AG04449 (cell line): ENCODE measurements at regions of chr16 and their contacts with region 1.

Region 1: DNA sequence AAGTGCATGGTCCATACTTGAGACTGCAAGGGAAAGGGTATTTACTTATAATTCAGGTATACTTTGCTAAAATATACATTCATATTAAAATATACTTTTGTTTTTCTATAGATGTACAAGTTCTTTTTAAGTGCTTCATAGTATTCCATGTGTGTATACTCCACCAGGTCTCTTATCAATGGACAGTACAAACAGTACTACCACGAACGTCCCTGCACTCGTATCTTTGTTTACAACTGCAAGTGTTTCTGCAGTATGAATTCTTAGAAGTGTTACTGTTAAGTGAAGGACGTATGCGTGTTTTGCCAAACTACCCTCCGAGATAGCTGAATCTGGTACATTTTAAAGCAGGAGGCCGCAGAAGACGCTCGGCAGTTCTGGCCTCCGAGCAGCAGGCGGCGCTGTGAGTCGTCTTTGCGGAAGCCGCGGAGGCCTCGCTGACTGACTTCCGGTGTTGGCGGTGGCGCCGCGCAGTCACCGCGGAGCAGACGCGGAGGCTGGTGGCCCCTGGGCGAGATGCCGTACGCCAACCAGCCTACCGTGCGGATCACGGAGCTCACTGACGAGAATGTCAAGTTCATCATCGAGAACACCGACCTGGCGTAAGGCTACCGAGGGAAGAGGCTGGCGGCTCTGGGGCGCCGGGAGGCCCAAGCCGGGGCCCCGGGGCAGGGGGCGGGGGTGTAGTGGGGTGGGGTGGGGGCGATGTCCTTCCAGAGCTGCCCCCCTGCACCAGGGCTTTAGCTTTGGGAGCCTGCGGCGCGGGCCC is at the start of gene POLR2C:
- DNase-seq: peak; percentile 12
- H3K4me3 ChIP-seq: peak within 1 kb of the TSS; percentile 69
- CTCF ChIP-seq: peak; percentile 94

Region 2: GRCh38 chr16:57447186-57447962 is 15.0 kb before region 1 on chr16 and contains the starts of genes CIAPIN1 and COQ9:
- CTCF ChIA-PET with region 1: interaction called, 141 read pairs
- POLR2A ChIA-PET with region 1: interaction called, 13 read pairs
- DNase-seq: peak; percentile 33
- H3K4me3 ChIP-seq: peak within 1 kb of the TSS; percentile 84
- CTCF ChIP-seq: no peak

Region 3: DNA sequence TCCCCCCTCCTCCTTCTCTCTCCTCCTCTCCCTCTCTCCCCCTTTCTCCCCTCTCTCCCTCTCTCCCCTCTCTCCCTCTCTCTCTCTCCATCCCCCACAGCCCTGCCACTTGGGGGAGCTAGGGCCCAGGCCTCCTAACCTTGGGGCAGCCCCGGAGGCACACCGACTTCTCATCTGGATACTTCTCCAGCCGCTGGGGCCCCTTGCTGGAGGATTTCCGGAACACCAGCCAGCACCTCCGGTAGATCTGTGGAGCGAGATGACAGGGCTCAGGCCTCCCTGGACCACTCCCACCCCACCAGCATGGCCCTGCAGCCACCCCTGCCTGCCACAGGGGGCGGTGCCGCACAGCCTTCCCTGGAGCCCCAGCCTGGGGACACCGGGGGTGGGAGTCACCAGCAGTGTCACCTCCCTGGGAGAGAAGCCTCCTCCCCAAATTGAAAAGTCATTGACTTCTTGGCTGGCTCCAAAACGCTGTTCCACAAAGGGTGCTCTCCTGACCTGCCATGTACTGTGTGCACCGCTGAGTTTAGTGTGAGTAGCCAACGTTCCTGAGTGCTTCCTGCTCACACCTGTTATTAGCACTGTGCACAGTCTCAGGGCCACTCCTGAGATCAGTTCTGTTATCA is 13.4 kb after region 1 on chr16:
- CTCF ChIA-PET with region 1: interaction called, 161 read pairs
- POLR2A ChIA-PET with region 1: interaction called, 10 read pairs
- DNase-seq: no peak
- H3K4me3 ChIP-seq: no peak overlapping the region
- CTCF ChIP-seq: peak; percentile 79

Region 4: GRCh38 chr16:57485916-57486857 is 23.8 kb after region 1 on chr16 and contains the start of gene DOK4:
- CTCF ChIA-PET with region 1: interaction called, 161 read pairs
- POLR2A ChIA-PET with region 1: interaction called, 10 read pairs
- DNase-seq: no peak
- H3K4me3 ChIP-seq: peak within 1 kb of the TSS; percentile 70
- CTCF ChIP-seq: no peak

Region 5: DNA sequence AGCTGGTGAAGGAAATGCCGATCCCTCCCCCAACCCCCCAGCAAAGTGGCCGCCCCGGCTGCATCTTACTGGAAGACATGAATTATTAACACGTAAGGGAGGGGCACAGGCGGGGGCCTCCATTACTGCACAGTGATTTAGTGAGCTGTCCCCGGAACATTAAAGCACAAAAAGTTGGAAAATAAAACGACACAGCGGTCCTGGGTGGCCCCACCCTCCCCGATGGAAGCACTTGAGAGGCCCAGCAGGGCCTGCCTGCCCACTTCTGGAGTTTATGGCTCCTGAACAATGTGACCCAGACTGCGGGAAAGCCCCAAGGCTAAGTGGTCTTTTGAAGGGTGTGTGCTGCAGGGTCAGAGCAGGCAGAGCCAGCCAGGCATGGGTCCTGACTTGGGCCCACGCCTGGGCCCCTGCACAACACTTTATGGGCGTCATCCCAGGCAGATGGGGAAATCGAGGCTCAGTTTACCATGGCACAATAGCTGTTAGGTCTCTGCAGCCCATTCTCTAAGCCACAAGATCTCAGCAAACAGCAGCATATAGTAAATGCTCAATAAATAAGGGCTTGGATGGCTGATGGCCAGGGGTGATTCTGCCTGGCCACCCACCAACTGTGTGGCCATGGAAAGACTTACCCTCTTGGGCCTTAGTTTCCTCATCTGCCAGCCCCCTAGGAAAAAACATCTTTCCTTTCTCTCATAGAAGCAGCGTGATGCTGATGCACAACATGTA is 51.1 kb after region 1 on chr16:
- CTCF ChIA-PET with region 1: interaction called, 40 read pairs
- POLR2A ChIA-PET with region 1: no interaction called
- DNase-seq: no peak
- H3K4me3 ChIP-seq: no peak overlapping the region
- CTCF ChIP-seq: no peak